Activated B cell treated with CpG ODN at 0.5 μM for 24 hours (primary cell): ENCODE measurements at regions of chr2 and their contacts with region 1.

Region 1: DNA sequence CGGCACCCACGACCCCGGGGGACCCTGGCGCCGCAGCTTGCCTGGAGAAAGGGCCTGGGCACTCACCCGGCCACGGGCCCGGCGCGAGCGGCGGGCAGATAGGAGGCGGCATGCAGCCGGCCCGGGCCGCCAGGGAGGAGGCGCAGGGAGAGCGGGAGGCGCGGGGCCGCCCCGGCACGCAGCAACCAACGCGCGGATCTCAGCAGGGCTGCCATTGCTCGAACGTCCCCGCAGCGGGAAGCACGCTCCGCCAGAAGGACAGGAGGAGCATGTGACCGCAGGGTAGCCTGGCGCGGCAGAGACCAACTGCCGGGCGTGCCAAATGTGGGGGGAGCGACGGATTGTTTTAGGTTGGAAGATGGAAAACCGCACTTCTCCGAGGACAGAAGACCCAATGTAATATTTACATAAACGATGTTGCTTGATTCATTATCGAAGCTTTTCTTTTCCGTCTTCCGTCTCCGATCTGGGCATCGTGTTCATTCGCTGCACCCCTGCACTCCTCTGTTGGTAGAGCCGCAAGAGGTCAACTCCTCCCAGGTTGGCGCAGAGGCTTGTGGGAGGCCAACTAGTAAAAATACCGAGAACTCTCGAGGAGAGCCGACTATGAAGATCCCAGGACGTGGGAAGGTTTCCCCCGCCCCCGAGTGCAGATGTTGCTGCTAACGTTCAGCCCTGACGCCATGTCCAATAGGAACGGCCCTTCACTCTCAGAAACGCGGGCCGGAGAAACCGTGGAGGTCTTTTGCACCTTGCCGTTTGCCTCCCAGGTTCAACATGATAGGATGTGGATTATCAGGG is at the start of gene LRPPRC:
- DNase-seq: peak; percentile 74
- ATAC-seq: peak; percentile 96
- H3K4me3 Mint-ChIP-seq: peak within 1 kb of the TSS; percentile 92
- H3K27ac Mint-ChIP-seq: peak within 1 kb of the TSS; percentile 98
- H3K4me1 Mint-ChIP-seq: peaks cover 49% of the 10 kb centered on the region
- H3K27me3 Mint-ChIP-seq: no peaks in the 10 kb centered on the region
- CTCF ChIP-seq: no peak
- total RNA-seq, gene LRPPRC: 114 and 120 TPM in 2 replicates

Region 2: GRCh38 chr2:43595603-43596412 is 400.1 kb before region 1 on chr2 and contains the start of gene THADA:
- CTCF ChIA-PET with region 1: no interaction called
- POLR2A ChIA-PET with region 1: interaction called, 5 read pairs
- intact Hi-C with region 1: loop called (anchors 1 kb)
- DNase-seq: peak; percentile 86
- ATAC-seq: peak; percentile 98
- H3K4me3 Mint-ChIP-seq: peak within 1 kb of the TSS; percentile 97
- H3K27ac Mint-ChIP-seq: peak within 1 kb of the TSS; percentile 95
- H3K4me1 Mint-ChIP-seq: peaks cover 27% of the 10 kb centered on the region
- H3K27me3 Mint-ChIP-seq: no peaks in the 10 kb centered on the region
- CTCF ChIP-seq: no peak
- total RNA-seq, gene THADA: 43.2 and 51.4 TPM in 2 replicates

Region 3: DNA sequence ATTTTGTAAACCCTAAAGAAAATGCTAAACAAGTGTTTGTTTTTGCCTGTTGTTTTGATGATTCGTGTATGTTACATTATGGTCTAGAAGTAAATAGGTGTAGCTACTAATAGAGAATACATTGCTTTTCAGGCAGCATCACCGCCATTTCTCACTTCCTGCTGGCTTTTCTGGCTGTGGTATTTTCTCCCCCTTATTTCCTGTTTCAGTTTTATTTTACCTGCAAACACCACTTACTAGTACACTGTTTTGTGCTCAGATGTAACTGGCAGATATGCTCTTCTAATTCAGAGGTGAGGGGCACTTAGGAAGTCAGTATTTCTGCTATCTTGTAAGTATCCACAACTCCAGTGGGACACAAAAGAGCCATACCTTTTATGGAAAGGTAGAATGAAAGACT is 241.3 kb after region 1 on chr2:
- CTCF ChIA-PET with region 1: no interaction called
- POLR2A ChIA-PET with region 1: no interaction called
- intact Hi-C with region 1: loop called (anchors 5 kb)
- DNase-seq: no peak
- ATAC-seq: peak; percentile 74
- H3K4me3 Mint-ChIP-seq: peak overlapping the region; percentile 11
- H3K27ac Mint-ChIP-seq: peak overlapping the region; percentile 27
- H3K4me1 Mint-ChIP-seq: peaks cover 35% of the 10 kb centered on the region
- H3K27me3 Mint-ChIP-seq: no peaks in the 10 kb centered on the region
- CTCF ChIP-seq: no peak

Region 4: GRCh38 chr2:44715671-44716081 is 719.7 kb after region 1 on chr2:
- CTCF ChIA-PET with region 1: no interaction called
- POLR2A ChIA-PET with region 1: no interaction called
- intact Hi-C with region 1: loop called (anchors 5 kb)
- DNase-seq: no peak
- ATAC-seq: no peak
- H3K4me3 Mint-ChIP-seq: no peak overlapping the region
- H3K27ac Mint-ChIP-seq: peak overlapping the region; percentile 46
- H3K4me1 Mint-ChIP-seq: peaks cover 47% of the 10 kb centered on the region
- H3K27me3 Mint-ChIP-seq: no peaks in the 10 kb centered on the region
- CTCF ChIP-seq: no peak